ENCODE measurements at regions of chr11 and their contacts with region 1.

Region 1: GRCh38 chr11:57345555-57346211 is 7.5 kb downstream of the P2RX3 start:
- DNase-seq: peak; percentile 55 to 71 (median 62)
- ATAC-seq: peak; percentile 61 to 82 (median 76)
- H3K4me3 ChIP-seq: no peak overlapping the region
- H3K27ac ChIP-seq: no peak overlapping the region
- H3K4me1 ChIP-seq: peaks cover 0 to 10% (median 4%) of the 10 kb centered on the region in 12 donors
- H3K27me3 ChIP-seq: no peaks in the 10 kb centered on the region
- CTCF ChIP-seq: peak; percentile 78 to 89 (median 82)
- POLR2A ChIP-seq: no peak

Region 2: DNA sequence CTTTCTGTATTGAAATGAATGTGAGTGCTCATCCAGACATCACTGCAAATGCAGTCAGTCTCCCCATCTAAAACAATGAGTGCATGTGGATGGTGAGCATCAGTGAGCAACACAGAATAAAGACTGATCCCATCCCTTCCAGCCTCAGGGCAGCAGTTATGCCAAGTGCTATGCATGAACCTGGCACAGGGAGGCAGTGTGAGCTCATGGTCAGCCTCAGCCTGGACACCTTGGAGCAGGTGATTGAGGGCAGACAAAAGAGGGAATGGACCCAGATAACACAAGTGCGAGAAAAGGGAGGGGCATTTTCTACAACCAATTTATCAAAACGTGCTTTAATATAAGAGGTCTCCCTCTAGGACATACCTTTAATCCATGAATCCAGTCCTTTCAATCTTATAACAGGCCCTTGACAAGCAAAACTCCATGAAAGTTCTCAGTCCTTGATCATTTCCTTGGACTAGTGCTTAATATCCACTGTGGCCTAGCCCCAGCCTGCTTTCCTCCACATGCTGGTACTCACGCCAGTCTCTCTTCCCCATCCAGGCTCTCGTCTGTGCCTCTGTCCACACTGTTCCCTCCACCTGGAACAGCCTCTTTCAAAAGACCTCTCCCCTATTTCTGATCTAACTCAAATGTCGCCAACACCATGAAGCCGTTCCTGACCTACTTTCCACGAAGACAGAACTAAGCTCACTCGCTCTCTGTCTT is 214.4 kb before region 1 on chr11:
- intact Hi-C with region 1: no loop called
- DNase-seq: peak in 3 of 5 donors; percentile 29 to 35 (median 33)
- ATAC-seq: peak in 3 of 4 donors; percentile 69 to 73 (median 72)
- H3K4me3 ChIP-seq: no peak overlapping the region
- H3K27ac ChIP-seq: no peak overlapping the region
- H3K4me1 ChIP-seq: peaks cover 0 to 5% (median 0%) of the 10 kb centered on the region in 12 donors
- H3K27me3 ChIP-seq: peaks cover 0 to 3% (median 0%) of the 10 kb centered on the region in 9 donors
- CTCF ChIP-seq: peak; percentile 30 to 75 (median 64)
- POLR2A ChIP-seq: no peak

Region 3: DNA sequence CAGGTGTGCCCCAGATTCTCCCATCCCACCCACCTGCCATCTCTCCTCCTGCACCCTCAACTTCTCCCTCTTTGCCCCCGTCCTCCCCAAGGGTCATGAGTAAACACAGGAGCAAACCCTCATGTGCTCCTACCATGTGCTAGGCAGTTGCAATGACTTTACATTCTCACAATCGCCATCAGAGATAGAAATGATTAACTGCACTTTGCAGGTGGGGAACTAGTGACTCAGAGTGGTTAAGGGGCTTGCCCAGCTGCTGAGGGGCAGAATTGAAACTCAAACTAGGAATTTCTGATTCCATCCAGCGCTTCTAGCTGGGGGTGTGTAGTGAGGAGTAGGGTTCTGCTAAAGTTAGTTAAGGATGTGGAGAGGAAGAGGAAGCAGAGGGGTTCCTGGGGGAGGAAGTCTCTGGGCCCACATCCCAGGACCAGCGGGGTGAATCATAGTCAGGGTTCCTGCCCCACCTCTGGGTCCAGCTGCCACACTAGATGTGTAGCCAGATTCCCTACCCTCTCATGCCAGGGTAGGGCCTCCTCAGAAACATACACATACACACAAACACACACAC is 60.7 kb after region 1 on chr11:
- intact Hi-C with region 1: loop called in 3 of 10 experiments (anchors 2 to 5 kb)
- DNase-seq: peak; percentile 34 to 71 (median 38)
- ATAC-seq: peak; percentile 55 to 93 (median 78)
- H3K4me3 ChIP-seq: no peak overlapping the region
- H3K27ac ChIP-seq: peak overlapping the region in 11 of 12 donors; percentile 33 to 75 (median 69)
- H3K4me1 ChIP-seq: peaks cover 4 to 32% (median 22%) of the 10 kb centered on the region in 12 donors
- H3K27me3 ChIP-seq: no peaks in the 10 kb centered on the region
- CTCF ChIP-seq: no peak
- POLR2A ChIP-seq: no peak

Region 4: GRCh38 chr11:57456960-57457642 is 111.4 kb after region 1 on chr11:
- intact Hi-C with region 1: loop called in 4 of 10 experiments (anchors 5 to 10 kb)
- DNase-seq: peak; percentile 87 to 95 (median 89)
- ATAC-seq: peak; percentile 57 to 89 (median 86)
- H3K4me3 ChIP-seq: peak overlapping the region in 2 of 12 donors; percentile 4 to 19
- H3K27ac ChIP-seq: no peak overlapping the region
- H3K4me1 ChIP-seq: peaks cover 3 to 43% (median 25%) of the 10 kb centered on the region in 12 donors
- H3K27me3 ChIP-seq: peaks cover 9 to 47% (median 32%) of the 10 kb centered on the region in 9 donors
- CTCF ChIP-seq: peak; percentile 98 to 100 (median 98)
- POLR2A ChIP-seq: no peak

Region 5: DNA sequence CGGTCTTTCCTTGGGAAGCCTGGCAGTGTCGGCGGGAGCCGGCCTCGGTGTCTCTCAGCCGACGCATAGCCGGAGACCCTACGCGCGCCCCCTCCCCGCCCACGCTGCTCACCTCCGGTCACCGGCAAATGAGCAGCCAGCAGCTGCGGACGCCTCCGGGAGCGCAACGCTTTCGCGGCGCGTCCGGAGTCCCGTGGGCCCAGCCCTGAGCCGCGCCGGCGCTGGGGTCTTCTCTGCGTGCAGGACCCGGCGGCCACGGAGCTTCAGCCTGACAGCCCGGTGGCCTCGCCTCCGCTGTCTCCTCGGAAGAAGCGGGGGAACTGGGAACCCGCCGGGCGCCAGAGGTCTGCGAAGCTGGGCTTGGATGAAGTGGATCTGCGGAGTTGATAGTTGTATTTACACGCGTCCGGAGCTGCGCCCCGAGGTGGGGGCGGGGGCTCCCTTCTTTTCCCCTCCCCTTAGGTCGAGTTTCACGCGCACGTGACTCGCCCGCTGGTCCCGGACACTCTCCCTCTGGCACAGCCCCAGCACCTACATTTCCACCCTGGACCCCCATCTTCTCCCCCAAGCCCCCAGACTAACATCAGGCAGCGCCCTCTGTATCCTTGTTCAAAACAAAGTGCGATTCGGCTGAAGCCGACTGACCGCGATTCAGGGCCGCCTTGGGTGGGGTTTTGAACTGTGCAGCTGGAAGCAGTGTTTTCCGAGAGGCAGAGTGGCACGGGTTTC is 169.8 kb after region 1 on chr11 and contains the start of gene SLC43A1:
- intact Hi-C with region 1: loop called in 1 of 10 experiments (anchors 10 kb)
- DNase-seq: peak; percentile 43 to 77 (median 63)
- ATAC-seq: peak; percentile 67 to 78 (median 75)
- H3K4me3 ChIP-seq: peak within 1 kb of the TSS; percentile 62 to 98 (median 80)
- H3K27ac ChIP-seq: peak within 1 kb of the TSS in 11 of 12 donors; percentile 23 to 77 (median 60)
- H3K4me1 ChIP-seq: peaks cover 0 to 26% (median 12%) of the 10 kb centered on the region in 12 donors
- H3K27me3 ChIP-seq: no peaks in the 10 kb centered on the region
- CTCF ChIP-seq: peak in 2 of 12 donors; percentile 13 to 15
- POLR2A ChIP-seq: peak in 1 of 2 donors; percentile 36
- total RNA-seq, gene SLC43A1: 2.7 to 12.3 (median 5.4) TPM

Region 6: DNA sequence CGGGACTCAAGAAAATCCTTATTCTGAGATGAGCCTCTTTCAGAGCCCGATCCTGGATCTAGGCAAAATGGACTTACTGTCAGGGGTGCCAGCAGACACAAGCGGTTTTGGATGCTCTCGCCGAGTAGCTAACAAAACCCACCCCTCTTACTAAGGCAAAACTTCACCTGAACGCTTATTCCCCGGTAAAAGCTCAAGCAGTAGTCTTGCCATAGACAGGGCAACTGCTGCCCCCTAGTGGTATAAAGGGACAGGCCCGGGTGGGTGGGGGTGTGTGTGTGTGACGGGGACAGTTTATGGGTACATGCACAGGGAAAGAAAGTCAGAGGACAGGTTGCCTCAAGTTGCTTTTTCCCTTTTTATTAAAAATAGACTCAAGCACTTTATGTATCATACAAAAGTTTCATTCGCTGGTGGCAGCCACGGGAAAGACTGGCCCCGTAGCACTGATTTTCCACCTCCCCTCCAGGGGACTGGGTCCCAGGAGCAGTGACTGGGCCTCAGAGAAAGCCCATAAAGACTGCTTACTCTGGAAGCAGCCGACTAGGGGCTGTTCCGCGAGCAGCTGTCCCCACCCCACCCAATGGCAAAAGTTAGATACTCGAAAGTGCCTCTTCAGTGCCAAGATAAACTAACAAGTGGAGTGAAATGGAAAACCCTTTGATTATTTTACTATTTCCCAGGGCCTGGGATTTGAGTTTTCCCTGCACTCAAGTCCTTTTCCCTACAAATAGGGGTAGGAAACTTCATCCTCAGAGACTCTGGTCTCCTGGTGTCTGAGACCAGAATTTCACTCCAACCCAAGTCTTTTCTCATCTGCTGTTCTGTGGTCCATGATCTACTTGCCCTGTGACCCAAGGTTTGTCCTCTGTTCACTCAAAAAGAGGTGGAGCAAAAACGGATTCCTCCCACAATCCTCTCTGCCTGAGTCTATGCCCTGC is 299.3 kb after region 1 on chr11:
- intact Hi-C with region 1: loop called (anchors 2 to 10 kb)
- DNase-seq: peak; percentile 74 to 83 (median 82)
- ATAC-seq: peak in 3 of 4 donors; percentile 74 to 80 (median 80)
- H3K4me3 ChIP-seq: peak overlapping the region in 3 of 12 donors; percentile 2 to 21 (median 19)
- H3K27ac ChIP-seq: peak overlapping the region in 10 of 12 donors; percentile 10 to 69 (median 56)
- H3K4me1 ChIP-seq: peaks cover 2 to 75% (median 46%) of the 10 kb centered on the region in 12 donors
- H3K27me3 ChIP-seq: peaks cover 4 to 43% (median 34%) of the 10 kb centered on the region in 9 donors
- CTCF ChIP-seq: peak; percentile 77 to 91 (median 86)
- POLR2A ChIP-seq: no peak